Gastrocnemius medialis (tissue), 4 donors: ENCODE measurements at regions of chr6 and their contacts with region 1.

Region 1: GRCh38 chr6:30102970-30103874 is 9.7 kb downstream of the TRIM31 start:
- DNase-seq: peak; percentile 80 to 88
- ATAC-seq: peak; percentile 87 to 90
- H3K4me3 ChIP-seq: peak overlapping the region; percentile 58 to 60 (median 58)
- H3K27ac ChIP-seq: peak overlapping the region; percentile 72 to 77 (median 74)
- H3K4me1 ChIP-seq: peaks cover 17 to 26% of the 10 kb centered on the region in 2 donors
- H3K27me3 ChIP-seq: peaks cover 25 to 36% (median 35%) of the 10 kb centered on the region in 3 donors
- CTCF ChIP-seq: peak; percentile 87 to 94 (median 91)
- POLR2A ChIP-seq: peak in 1 of 2 donors; percentile 27

Region 2: DNA sequence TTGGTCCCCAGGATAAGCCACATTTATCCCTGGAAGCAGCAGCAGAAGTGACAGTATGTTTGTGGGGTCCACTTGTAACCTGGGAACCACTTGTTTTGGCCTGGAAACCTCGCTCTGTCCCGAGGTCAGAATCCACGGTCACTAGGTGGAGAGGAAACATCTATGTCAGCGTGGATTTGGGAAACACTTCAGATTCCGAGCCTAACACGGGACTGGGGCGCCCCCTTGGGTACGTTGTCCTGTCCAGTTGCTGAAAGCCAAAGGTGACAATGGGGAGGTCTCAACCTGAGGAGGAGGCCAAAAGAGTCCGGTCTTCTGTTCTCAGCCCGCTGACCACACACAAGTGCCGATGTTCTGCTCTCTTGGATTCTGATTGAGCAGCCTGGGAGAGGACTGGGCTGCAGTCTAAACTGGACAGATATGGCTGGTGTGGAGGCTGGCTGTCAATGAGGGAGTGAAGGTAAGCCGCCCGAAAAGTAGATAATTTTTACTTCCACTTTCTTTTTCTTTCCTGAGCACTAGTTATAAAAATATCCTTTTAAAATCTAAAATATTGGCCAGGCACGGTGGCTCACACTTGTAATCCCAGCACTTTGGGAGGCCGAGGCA is 417.4 kb before region 1 on chr6:
- in situ Hi-C with region 1: no loop called
- intact Hi-C with region 1: no loop called
- DNase-seq: no peak
- ATAC-seq: no peak
- H3K4me3 ChIP-seq: no peak overlapping the region
- H3K27ac ChIP-seq: no peak overlapping the region
- H3K4me1 ChIP-seq: no peaks in the 10 kb centered on the region
- H3K27me3 ChIP-seq: peaks cover 0 to 7% (median 0%) of the 10 kb centered on the region in 3 donors
- CTCF ChIP-seq: no peak
- POLR2A ChIP-seq: no peak

Region 3: GRCh38 chr6:30066577-30067459 is 36.4 kb before region 1 on chr6 and contains the start of gene PPP1R11:
- in situ Hi-C with region 1: no loop called
- intact Hi-C with region 1: loop called (anchors 1 kb)
- DNase-seq: peak; percentile 97 to 98
- ATAC-seq: peak; percentile 95 to 96
- H3K4me3 ChIP-seq: peak within 1 kb of the TSS; percentile 79 to 95 (median 86)
- H3K27ac ChIP-seq: peak within 1 kb of the TSS; percentile 85 to 93 (median 90)
- H3K4me1 ChIP-seq: peaks cover 29 to 33% of the 10 kb centered on the region in 2 donors
- H3K27me3 ChIP-seq: peaks cover 9 to 16% (median 10%) of the 10 kb centered on the region in 3 donors
- CTCF ChIP-seq: peak in 1 of 5 experiments; percentile 8
- POLR2A ChIP-seq: peak; percentile 57 to 80
- total RNA-seq, gene PPP1R11: 34.0 to 72.4 (median 49.9) TPM

Region 4: DNA sequence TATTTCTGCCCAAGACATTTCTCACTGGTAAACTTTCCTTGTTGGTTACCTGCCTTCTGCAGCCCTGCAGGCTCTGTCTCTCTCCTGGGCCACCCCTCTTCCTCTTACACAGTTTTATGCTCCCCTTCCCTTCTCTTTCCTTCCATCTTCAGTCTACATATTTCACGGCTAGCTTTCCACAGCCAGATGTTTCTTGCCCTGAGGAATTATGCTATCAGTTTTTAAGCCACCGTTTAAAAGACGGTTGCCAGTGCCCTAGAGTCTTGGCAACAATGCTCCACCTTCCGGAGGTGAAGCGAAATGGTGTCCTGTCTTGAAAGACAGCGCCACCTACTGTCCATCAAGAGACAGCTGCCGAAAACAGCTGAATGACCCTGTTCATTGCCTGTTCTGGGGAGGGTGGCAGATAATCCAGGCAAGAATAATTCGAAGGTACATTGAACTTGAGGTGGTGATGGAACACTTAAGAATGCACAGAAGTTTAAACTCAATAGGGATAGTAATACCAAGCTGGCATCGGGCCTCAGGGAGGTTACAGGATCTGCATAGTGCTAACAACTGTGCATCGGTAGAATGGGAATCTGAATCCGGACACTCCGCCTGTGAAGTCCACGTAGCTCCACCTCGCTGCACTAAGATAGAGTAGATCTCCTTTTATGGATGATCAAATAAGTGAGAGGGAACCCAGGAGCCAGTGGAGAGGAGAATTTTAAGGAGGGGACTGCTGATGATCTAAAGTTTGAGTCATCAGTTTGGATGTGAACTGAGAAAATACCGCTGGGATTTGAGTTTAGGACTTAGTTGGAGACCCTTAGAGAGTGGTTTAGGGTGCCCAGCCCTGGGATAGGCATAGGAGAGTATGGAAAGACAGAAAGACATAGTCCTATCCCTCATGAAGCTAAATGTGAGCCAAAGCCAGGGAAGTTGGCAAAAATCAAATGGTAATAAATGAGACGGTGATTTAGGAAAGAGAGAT is 28.0 kb after region 1 on chr6:
- in situ Hi-C with region 1: no loop called
- intact Hi-C with region 1: loop called (anchors 1 kb)
- DNase-seq: peak; percentile 47 to 65
- ATAC-seq: peak; percentile 95 to 99
- H3K4me3 ChIP-seq: no peak overlapping the region
- H3K27ac ChIP-seq: no peak overlapping the region
- H3K4me1 ChIP-seq: peaks cover 4 to 10% of the 10 kb centered on the region in 2 donors
- H3K27me3 ChIP-seq: peaks cover 39 to 54% (median 46%) of the 10 kb centered on the region in 3 donors
- CTCF ChIP-seq: peak; percentile 77 to 98 (median 85)
- POLR2A ChIP-seq: no peak

Region 5: DNA sequence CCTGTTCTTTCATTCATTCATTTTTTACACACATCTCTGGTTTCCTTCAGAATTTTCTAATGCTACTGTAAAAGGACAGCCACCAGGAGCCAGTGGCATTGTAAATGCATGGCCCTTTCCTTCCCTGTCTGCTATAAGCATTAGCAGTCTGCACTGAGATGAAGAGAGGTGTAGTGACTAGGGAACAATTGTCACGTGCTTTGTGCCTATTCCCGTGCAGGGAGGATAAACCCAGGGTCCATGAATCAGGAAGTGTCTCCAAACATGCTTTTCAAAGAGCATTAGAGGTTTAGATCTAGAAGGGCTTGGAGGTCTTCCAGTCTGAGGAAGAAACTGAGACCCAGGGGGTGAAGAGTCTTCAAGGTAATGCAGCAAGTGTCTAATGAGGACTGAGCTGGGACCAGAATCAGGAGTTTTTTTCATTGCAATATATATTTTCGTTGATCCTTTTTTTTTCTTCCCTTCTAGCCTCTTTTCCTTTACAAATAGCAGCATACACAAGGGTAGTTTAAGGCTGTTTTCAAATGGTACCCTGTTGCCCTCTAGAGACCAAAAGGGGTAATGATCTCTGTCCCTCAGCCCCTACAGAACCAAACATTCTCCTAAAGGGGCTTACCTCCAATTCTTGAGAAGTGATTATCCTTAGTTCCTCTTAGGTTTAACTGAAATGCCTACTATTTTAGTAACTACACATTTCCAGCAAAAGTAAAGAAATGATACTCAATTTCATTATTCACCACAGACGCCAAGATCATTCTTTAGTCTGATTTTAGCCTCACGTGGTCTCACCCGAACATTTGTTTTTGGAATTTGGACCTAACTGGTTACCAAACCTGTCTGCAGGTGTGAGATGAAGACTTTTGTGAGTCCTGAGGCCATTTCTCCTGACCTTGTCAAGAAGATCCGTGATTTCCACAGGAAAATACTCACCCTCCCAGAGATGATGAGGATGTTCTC is 66.7 kb after region 1 on chr6:
- in situ Hi-C with region 1: no loop called
- intact Hi-C with region 1: loop called (anchors 1 kb)
- DNase-seq: no peak
- ATAC-seq: peak in 1 of 2 donors; percentile 60
- H3K4me3 ChIP-seq: no peak overlapping the region
- H3K27ac ChIP-seq: no peak overlapping the region
- H3K4me1 ChIP-seq: no peaks in the 10 kb centered on the region
- H3K27me3 ChIP-seq: peaks cover 37 to 38% (median 37%) of the 10 kb centered on the region in 3 donors
- CTCF ChIP-seq: peak; percentile 24 to 64 (median 34)
- POLR2A ChIP-seq: no peak

Region 6: DNA sequence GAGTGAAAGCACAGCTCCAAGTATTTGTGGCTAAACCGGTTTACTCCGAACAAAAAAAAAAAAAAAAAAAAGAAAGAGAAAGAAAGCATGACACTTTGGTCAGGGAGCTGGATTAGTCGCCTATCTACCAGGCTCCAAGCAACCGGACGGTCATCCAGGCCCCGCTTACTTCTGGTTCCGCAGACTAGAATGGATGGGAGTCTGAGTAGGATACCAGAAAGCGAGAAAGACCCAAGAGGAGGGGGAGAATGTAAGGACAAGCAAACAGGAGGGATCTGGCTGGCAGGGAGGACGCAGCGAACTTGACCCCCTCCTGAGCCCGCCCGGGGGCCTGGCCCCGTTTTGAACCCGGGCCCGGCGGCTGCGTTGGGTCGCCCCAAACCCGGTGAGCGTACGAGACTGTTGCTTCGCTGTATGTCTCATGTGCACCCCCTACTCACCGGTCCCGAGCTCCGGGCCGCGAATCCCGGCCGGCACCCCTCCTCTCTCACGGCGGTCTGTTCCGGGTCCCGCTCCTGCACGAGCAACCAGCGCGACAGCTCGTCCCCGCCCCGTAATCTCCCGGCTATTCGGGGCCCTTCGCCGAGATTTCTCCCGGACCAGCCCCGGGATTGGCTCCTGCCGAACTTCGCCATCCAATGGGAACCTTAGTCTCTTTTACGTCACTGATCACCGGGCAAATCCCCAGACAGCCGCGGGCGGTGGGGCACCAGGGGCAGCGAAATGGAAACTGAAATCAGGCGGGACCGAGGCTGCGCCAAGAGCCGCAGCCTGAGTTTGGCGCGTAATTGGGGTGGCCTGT is 109.8 kb after region 1 on chr6 and contains the start of gene TRIM26:
- in situ Hi-C with region 1: no loop called
- intact Hi-C with region 1: loop called (anchors 2 kb)
- DNase-seq: peak; percentile 96 to 97
- ATAC-seq: peak; percentile 97 to 98
- H3K4me3 ChIP-seq: peak within 1 kb of the TSS; percentile 62 to 100 (median 92)
- H3K27ac ChIP-seq: peak within 1 kb of the TSS; percentile 91 to 95 (median 92)
- H3K4me1 ChIP-seq: peaks cover 20 to 22% of the 10 kb centered on the region in 2 donors
- H3K27me3 ChIP-seq: no peaks in the 10 kb centered on the region
- CTCF ChIP-seq: no peak
- POLR2A ChIP-seq: peak; percentile 95 to 98
- total RNA-seq, gene TRIM26: 22.8 to 30.9 (median 25.1) TPM

Region 7: DNA sequence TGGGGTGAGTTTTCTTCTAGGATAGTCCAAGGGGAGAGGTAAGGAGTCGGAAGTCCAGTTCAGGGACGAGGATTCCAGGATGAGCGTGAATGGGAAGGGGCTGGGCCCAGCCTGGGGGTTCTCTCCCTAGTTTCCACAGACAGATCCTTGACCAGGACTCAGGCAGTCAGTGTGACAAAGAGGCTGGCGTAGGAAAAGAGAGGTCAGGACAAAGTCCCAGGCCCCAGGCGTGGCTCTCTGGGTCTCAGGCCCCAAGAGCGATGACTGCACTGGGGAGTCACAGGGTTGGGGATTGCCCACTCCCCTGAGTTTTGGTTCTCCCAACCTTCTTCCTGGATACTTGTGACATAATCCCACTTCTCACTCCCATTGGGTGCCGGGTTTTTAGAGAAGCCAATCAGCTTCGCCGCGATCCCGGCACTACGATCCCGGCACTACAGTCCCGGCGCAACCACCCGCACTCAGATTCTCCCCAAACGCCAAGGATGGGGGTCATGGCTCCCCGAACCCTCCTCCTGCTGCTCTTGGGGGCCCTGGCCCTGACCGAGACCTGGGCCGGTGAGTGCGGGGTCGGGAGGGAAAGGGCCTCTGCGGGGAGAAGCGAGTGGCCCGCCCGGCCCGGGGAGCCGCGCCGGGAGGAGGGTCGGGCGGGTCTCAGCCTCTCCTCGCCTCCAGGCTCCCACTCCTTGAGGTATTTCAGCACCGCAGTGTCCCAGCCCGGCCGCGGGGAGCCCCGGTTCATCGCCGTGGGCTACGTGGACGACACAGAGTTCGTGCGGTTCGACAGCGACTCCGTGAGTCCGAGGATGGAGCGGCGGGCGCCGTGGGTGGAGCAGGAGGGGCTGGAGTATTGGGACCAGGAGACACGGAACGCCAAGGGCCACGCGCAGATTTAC is 156.2 kb after region 1 on chr6:
- in situ Hi-C with region 1: no loop called
- intact Hi-C with region 1: loop called (anchors 5 kb)
- DNase-seq: peak; percentile 50 to 59
- ATAC-seq: peak; percentile 95 to 96
- H3K4me3 ChIP-seq: peak overlapping the region; percentile 70 to 94 (median 84)
- H3K27ac ChIP-seq: peak overlapping the region; percentile 67 to 77 (median 72)
- H3K4me1 ChIP-seq: peaks cover 4 to 10% of the 10 kb centered on the region in 2 donors
- H3K27me3 ChIP-seq: no peaks in the 10 kb centered on the region
- CTCF ChIP-seq: peak in 2 of 5 experiments; percentile 9 to 28
- POLR2A ChIP-seq: peak; percentile 22 to 56

Region 8: DNA sequence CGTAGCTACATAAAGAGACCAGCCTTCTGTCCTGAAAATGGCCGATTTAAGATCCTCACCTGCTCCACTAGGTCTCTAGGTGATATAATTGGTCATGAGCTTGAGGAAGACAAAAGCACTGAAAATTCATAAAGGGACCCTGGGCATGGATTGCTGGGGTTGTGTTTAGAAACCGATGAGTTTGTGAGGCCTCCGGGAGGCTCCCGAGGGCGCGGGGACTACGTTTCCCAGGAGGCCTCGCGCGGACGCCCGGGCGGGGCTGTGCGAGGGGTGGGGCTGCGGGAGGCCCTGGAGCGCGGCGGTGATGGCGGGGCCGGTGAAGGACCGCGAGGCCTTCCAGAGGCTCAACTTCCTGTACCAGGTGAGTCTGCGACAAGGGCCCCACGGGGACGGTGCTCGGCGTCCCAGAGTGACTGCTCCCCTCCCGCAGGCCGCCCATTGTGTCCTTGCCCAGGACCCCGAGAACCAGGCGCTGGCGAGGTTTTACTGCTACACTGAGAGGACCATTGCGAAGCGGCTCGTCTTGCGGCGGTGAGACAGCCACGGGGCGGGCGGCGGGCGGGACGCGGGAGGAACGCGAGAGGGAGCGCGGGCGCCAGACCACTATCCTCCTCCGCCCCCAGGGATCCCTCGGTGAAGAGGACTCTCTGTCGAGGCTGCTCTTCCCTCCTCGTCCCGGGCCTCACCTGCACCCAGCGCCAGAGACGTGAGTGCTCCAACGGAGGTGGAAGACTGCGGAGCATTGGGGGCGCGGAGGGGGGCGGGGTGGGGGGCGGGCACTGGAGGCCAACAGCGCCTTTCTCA is 241.8 kb after region 1 on chr6 and contains the start of gene RPP21:
- in situ Hi-C with region 1: no loop called
- intact Hi-C with region 1: loop called (anchors 2 kb)
- DNase-seq: peak; percentile 70 to 74
- ATAC-seq: peak; percentile 95 to 97
- H3K4me3 ChIP-seq: peak within 1 kb of the TSS; percentile 81 to 99 (median 98)
- H3K27ac ChIP-seq: peak within 1 kb of the TSS; percentile 91 to 95 (median 94)
- H3K4me1 ChIP-seq: peaks cover 5 to 12% of the 10 kb centered on the region in 2 donors
- H3K27me3 ChIP-seq: no peaks in the 10 kb centered on the region
- CTCF ChIP-seq: no peak
- POLR2A ChIP-seq: peak; percentile 51 to 60
- total RNA-seq, gene RPP21: 44.5 to 103 (median 85.4) TPM